Activated CD4-positive, alpha-beta T cell treated with anti-CD3 and anti-CD28 coated beads, Interleukin-2, amount 10 ng/mL, durations not matched to agents 7 days and 5 days (primary cell): ENCODE measurements at regions of chr1 and their contacts with region 1.

Region 1: GRCh38 chr1:156659994-156660751 is 17.0 kb downstream of the NES start:
- DNase-seq: peak; percentile 92
- H3K4me3 Mint-ChIP-seq: peak overlapping the region; percentile 73
- H3K27ac Mint-ChIP-seq: peak overlapping the region; percentile 82
- H3K4me1 Mint-ChIP-seq: peaks cover 61% of the 10 kb centered on the region
- H3K27me3 Mint-ChIP-seq: peaks cover 35% of the 10 kb centered on the region

Region 2: DNA sequence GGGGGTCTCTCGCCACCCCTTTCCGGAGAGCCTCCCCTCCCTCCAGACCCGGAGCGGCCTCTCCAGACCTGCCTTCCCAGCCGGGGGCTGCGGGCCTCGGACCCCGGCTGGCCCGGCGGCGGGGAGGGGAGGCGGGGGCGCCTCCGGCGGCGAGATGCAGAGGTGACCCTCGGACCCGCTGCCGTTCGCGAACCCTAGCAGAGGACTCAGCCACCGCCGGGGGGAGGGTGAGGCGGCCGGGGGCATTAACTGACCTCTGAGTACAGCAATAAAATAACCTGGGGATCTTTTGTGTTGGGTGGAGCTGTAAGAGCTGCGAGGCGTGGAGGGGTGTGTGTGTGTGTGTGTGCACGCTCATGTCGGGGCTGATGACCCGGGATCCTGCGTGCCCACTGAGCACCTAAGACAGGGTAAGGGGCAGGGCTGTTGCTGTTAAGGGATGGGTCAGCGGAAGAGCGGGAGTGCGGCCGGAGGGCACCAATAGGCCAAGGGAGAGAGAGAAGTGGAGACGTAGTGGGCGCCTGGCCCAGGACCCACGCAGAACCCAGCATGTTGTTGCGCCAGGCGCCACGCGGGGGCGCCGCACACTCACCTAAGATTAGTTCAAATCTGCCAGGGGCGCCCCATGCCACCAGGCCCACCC is 34.6 kb before region 1 on chr1:
- CTCF ChIA-PET with region 1: interaction called, 30 read pairs
- POLR2A ChIA-PET with region 1: no interaction called
- DNase-seq: peak; percentile 71
- H3K4me3 Mint-ChIP-seq: peak overlapping the region; percentile 55
- H3K27ac Mint-ChIP-seq: peak overlapping the region; percentile 21
- H3K4me1 Mint-ChIP-seq: peaks cover 12% of the 10 kb centered on the region
- H3K27me3 Mint-ChIP-seq: peaks cover 66% of the 10 kb centered on the region

Region 3: GRCh38 chr1:156641761-156642264 is 18.4 kb before region 1 on chr1 and contains the start of gene BCAN:
- CTCF ChIA-PET with region 1: interaction called, 20 read pairs
- POLR2A ChIA-PET with region 1: no interaction called
- DNase-seq: no peak
- H3K4me3 Mint-ChIP-seq: peak within 1 kb of the TSS; percentile 3
- H3K27ac Mint-ChIP-seq: no peak within 1 kb of the TSS
- H3K4me1 Mint-ChIP-seq: peaks cover 33% of the 10 kb centered on the region
- H3K27me3 Mint-ChIP-seq: peaks cover 77% of the 10 kb centered on the region
- total RNA-seq, gene BCAN: not detected

Region 4: DNA sequence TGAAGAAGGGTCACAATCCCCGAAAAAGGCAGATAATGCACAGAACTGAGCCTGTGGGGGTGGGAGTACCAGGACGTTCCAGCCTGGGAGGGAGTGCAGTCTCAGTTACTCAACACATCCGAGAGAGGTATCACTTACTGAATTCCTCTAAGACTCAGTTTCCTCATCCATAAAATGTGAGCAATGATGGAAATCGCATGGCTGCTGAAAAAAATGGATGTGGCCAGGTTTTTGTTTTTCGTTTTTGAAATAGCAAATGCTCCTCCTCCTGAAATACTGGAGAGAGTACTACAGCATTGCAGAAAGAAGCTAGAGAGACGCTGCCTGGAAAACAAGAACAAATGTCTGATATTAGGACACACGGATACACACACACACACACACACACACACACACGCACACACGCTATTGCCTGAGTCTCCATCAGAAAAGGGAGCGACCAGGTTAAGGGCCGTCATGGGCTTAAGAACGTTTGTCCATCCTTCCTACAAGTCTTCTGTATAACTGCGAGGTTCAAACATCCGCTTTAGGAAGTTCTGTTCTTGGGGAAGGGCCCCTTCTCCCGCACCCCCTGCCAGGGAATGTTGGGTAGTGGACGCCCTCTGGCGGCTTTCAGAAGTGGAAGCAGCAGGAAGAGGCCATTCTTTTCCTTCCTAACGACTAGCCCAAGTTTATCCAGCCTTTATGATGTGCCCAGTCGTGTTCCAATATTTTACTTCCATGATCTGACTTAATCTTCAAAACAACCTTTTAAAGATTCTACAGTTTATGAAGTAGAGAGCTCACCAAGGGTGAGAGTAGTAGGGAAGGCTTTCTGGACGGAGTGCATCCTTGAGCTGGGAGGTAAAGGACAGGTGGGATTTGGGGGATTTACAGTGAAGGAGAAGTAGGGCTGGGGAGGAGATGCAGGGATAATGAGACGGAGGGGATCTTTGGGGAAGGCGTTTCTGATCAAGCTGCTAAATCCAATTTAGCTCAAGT is 17.7 kb after region 1 on chr1:
- CTCF ChIA-PET with region 1: interaction called, 38 read pairs
- POLR2A ChIA-PET with region 1: no interaction called
- DNase-seq: peak; percentile 34
- H3K4me3 Mint-ChIP-seq: no peak overlapping the region
- H3K27ac Mint-ChIP-seq: no peak overlapping the region
- H3K4me1 Mint-ChIP-seq: peaks cover 3% of the 10 kb centered on the region
- H3K27me3 Mint-ChIP-seq: peaks cover 69% of the 10 kb centered on the region

Region 5: GRCh38 chr1:156689035-156689952 is 29.1 kb after region 1 on chr1:
- CTCF ChIA-PET with region 1: interaction called, 22 read pairs
- POLR2A ChIA-PET with region 1: no interaction called
- DNase-seq: peak; percentile 76
- H3K4me3 Mint-ChIP-seq: no peak overlapping the region
- H3K27ac Mint-ChIP-seq: no peak overlapping the region
- H3K4me1 Mint-ChIP-seq: peaks cover 31% of the 10 kb centered on the region
- H3K27me3 Mint-ChIP-seq: peaks cover 63% of the 10 kb centered on the region

Region 6: GRCh38 chr1:156705918-156706656 is 45.9 kb after region 1 on chr1:
- CTCF ChIA-PET with region 1: interaction called, 25 read pairs
- POLR2A ChIA-PET with region 1: no interaction called
- DNase-seq: peak; percentile 65
- H3K4me3 Mint-ChIP-seq: peak overlapping the region; percentile 71
- H3K27ac Mint-ChIP-seq: no peak overlapping the region
- H3K4me1 Mint-ChIP-seq: peaks cover 25% of the 10 kb centered on the region
- H3K27me3 Mint-ChIP-seq: peaks cover 38% of the 10 kb centered on the region